Gastrocnemius medialis (tissue), 4 donors: ENCODE measurements at regions of chr9 and their contacts with region 1.

Region 1: GRCh38 chr9:34048923-34049697 is 423 bp upstream of the UBAP2 start:
- DNase-seq: peak; percentile 96 to 97
- ATAC-seq: peak; percentile 95 to 96
- H3K4me3 ChIP-seq: peak overlapping the region; percentile 74 to 90 (median 85)
- H3K27ac ChIP-seq: peak overlapping the region; percentile 90 to 97 (median 94)
- H3K4me1 ChIP-seq: peaks cover 19 to 22% of the 10 kb centered on the region in 2 donors
- H3K27me3 ChIP-seq: no peaks in the 10 kb centered on the region
- CTCF ChIP-seq: peak in 3 of 5 experiments; percentile 9 to 55 (median 32)
- POLR2A ChIP-seq: peak in 1 of 2 donors; percentile 8

Region 2: DNA sequence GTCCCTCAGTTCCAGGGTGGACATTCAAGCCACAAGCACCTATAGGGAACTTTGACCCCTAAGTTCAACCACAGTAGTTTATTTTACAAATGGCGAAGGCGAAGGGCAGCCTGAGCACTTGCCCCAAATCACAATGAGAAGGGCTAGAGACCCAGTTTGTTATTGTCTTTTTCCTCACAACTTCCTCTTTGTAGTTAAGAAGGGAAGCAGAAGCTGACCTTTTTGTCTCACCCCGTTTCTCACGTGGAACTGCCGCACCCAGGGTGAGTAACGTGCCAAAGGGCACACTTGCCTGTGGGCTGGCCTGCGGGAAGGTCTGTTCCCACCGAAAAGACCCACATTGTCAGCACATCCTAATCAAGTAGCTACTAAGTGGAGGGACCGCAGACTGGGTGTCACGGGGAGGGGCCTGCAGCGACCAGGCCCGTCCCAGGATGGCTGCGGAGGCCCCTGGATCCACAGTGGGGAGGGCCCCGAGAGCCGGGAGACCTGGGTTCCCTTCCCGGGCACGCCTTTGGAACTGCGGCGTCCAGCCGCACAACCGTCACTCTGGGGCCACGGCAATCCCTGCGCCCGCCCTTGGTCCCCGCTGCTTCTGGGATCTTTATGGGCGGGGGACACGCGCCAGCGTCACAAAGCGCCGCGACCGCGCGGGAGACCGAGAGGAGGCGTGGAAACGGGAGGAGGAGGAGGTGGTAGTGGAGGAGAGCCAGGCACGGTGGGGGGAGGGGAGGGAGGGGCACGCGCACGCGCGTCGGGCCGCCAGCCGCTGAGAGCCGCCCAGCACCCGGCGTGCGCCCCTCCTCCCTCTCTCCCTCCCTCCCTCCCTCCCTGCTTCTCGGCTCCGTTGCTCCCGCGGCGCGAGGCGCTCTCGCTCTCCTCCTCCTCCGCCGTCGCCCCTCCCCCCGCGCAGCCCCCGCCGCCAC is 232.5 kb before region 1 on chr9 and contains the start of gene UBE2R2:
- in situ Hi-C with region 1: no loop called
- intact Hi-C with region 1: loop called (anchors 10 kb)
- DNase-seq: peak; percentile 87 to 91
- ATAC-seq: peak; percentile 65 to 76
- H3K4me3 ChIP-seq: peak within 1 kb of the TSS; percentile 80 to 94 (median 90)
- H3K27ac ChIP-seq: peak within 1 kb of the TSS; percentile 92 to 100 (median 98)
- H3K4me1 ChIP-seq: peaks cover 45 to 52% of the 10 kb centered on the region in 2 donors
- H3K27me3 ChIP-seq: no peaks in the 10 kb centered on the region
- CTCF ChIP-seq: no peak
- POLR2A ChIP-seq: peak; percentile 75 to 79
- total RNA-seq, gene UBE2R2: 32.5 to 47.3 (median 41.9) TPM

Region 3: DNA sequence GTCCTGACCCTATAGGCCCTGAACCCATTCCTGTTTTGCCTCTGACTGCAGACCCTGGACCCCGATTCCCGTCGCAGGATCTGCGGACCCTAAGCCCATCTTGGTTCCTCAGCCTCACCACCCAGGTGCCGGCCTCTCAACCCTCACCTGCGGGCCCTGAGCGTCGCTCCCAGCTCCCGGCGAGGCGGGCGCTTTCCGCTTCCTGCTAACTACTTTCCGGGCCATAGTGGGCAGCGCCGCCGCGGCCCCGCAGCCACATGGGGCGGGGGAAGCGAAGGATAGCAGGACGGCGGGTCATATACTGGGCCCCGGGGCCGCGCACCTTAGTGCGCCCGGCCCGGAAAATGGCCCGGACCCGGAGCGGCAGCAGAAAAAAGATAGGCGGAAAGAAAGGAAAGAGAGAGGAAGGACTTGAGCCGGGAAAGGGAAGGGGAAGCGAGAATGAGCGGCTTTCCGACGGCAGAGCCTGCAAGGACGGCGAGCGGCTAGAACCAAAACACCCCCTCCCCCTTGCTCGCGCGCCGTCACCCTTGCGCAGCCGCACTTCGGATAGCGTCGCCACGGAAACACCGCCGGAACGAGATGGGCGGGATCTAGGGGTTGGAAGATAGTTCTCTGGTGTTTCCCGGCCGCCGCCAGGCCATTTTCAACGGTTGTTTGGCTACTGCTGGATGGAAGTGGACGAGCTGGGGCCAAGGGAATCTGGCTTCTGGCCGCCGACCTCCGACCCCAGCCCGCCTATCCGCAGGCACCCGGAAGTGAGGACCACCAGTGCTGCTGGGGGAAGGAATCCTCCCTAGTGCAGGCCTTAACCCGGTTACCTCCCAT is 77.3 kb after region 1 on chr9 and contains the start of gene DCAF12:
- in situ Hi-C with region 1: no loop called
- intact Hi-C with region 1: loop called (anchors 1 kb)
- DNase-seq: peak; percentile 81 to 86
- ATAC-seq: peak; percentile 96 to 98
- H3K4me3 ChIP-seq: peak within 1 kb of the TSS; percentile 69 to 99 (median 84)
- H3K27ac ChIP-seq: peak within 1 kb of the TSS; percentile 84 to 98 (median 90)
- H3K4me1 ChIP-seq: peaks cover 30 to 31% of the 10 kb centered on the region in 2 donors
- H3K27me3 ChIP-seq: no peaks in the 10 kb centered on the region
- CTCF ChIP-seq: peak in 1 of 5 experiments; percentile 23
- POLR2A ChIP-seq: peak; percentile 66 to 80
- total RNA-seq, gene DCAF12: 19.4 to 33.7 (median 26.7) TPM

Region 4: DNA sequence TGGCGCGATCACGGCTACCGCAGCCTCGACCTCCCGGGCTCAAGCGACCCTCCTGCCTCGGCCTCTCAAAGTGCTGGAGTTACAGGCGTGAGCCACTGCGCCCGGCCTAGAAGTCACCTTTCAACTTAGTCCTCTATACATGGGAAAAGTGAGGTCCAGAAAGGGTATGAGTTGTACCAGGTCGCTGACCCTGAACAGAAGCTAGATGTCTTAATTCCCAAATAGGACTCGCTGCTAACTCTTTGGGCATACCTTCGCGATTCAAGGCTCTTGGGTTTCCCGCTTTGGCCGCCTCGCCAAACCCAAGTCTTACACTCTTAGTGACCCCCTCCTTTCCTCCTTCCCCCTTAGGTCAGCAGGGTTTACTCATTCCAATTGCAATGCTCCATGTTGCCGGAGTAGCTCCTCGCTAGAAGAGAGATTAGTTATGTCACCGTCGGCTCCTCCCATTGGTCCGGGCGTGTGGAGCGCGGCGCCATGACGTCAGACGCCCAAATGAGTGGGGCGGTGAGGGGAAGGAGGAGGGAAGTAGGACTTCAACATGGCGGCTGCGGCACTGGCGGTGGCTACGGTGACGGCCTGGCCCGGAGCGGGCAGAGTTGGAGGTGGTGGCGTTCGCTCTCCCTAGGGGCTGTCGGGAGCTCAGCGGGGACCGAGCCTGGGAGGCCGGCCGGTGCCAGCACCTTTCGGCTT is 129.6 kb after region 1 on chr9 and contains the start of gene UBAP1:
- in situ Hi-C with region 1: no loop called
- intact Hi-C with region 1: loop called (anchors 10 kb)
- DNase-seq: peak; percentile 96 to 97
- ATAC-seq: peak; percentile 95 to 97
- H3K4me3 ChIP-seq: peak within 1 kb of the TSS; percentile 73 to 98 (median 90)
- H3K27ac ChIP-seq: peak within 1 kb of the TSS; percentile 93 to 99 (median 96)
- H3K4me1 ChIP-seq: peaks cover 9 to 17% of the 10 kb centered on the region in 2 donors
- H3K27me3 ChIP-seq: no peaks in the 10 kb centered on the region
- CTCF ChIP-seq: no peak
- POLR2A ChIP-seq: peak; percentile 90 to 97
- total RNA-seq, gene UBAP1: 69.5 to 162 (median 90.8) TPM